Activated CD8-positive, alpha-beta memory T cell treated with anti-CD3 and anti-CD28 coated beads, Interleukin-2, amount 10 ng/mL, durations not matched to agents 7 days and 5 days (primary cell): ENCODE measurements at regions of chr12 and their contacts with region 1.

Region 1: DNA sequence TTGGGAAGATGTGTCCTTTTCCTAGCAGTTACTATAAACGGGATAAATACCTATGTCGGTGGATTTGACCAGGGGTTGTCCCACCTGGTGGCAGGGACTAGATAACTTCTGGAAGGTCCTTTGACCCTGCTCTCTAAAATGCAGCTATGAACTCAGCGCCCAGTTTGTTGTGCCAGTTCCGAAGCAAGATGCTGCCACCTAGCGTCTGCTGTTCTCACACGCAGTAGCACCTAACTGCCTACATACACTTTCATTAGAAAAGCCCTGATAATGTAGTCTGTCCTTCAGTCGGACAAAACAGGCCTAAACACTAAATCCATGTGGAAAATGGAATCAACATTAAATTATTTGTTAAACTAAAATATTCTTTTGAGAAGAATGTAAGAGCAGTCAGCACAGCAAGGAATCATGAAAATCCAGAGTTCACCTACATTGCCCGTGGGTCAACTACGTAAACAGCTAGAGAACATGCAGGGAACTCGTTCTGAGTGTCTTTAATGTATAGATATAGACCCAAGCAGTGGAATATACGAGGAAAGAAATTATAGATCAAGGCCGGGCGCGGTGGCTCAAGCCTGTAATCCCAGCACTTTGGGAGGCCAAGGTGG is 51.1 kb upstream of the CRACR2A start:
- DNase-seq: peak; percentile 85
- ATAC-seq: peak; percentile 83
- H3K4me3 Mint-ChIP-seq: no peak overlapping the region
- H3K27ac Mint-ChIP-seq: no peak overlapping the region
- H3K4me1 Mint-ChIP-seq: peaks cover 4% of the 10 kb centered on the region
- H3K27me3 Mint-ChIP-seq: no peaks in the 10 kb centered on the region

Region 2: GRCh38 chr12:3313675-3314663 is 490.0 kb before region 1 on chr12:
- CTCF ChIA-PET with region 1: interaction called, 23 read pairs
- DNase-seq: peak; percentile 45
- ATAC-seq: peak; percentile 76
- H3K4me3 Mint-ChIP-seq: no peak overlapping the region
- H3K27ac Mint-ChIP-seq: no peak overlapping the region
- H3K4me1 Mint-ChIP-seq: no peaks in the 10 kb centered on the region
- H3K27me3 Mint-ChIP-seq: peaks cover 8% of the 10 kb centered on the region

Region 3: GRCh38 chr12:3718100-3718499 is 85.9 kb before region 1 on chr12:
- CTCF ChIA-PET with region 1: no interaction called
- DNase-seq: peak; percentile 8
- ATAC-seq: no peak
- H3K4me3 Mint-ChIP-seq: no peak overlapping the region
- H3K27ac Mint-ChIP-seq: no peak overlapping the region
- H3K4me1 Mint-ChIP-seq: peaks cover 4% of the 10 kb centered on the region
- H3K27me3 Mint-ChIP-seq: no peaks in the 10 kb centered on the region

Region 4: GRCh38 chr12:3743803-3744202 is 60.2 kb before region 1 on chr12:
- CTCF ChIA-PET with region 1: interaction called, 10 read pairs
- DNase-seq: peak; percentile 93
- ATAC-seq: peak; percentile 82
- H3K4me3 Mint-ChIP-seq: peak overlapping the region; percentile 58
- H3K27ac Mint-ChIP-seq: peak overlapping the region; percentile 96
- H3K4me1 Mint-ChIP-seq: peaks cover 82% of the 10 kb centered on the region
- H3K27me3 Mint-ChIP-seq: no peaks in the 10 kb centered on the region

Region 5: DNA sequence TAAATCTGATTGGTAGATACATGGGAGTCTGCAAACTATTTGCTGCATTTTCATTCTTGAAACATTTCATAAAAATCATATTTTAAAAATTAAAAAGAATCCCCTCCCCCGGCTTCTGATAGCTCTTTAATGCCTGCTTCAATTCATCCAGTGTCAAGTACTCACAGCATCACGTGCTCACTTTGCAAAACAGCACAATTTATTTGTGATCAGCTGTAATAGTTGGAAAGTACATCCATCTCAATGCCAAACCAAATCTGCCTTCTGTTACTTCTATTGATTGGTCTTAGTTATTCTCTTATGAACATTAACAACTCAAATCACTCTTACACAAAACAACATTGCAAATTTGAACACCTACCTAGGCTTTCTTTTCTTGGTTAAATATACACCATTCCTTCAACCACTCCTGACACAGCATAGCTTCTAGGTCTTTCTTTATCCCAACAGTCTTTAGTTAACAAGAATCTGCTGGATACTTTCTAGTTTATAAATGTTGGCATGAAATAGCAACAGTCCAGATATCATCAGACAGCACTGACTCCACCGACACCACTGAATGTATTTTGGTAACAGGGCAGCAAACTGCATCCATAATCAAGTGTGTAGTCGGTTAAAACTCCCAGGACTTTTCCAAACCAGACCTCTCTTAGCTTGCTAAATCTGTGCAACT is 11.3 kb after region 1 on chr12:
- CTCF ChIA-PET with region 1: interaction called, 15 read pairs
- DNase-seq: no peak
- ATAC-seq: no peak
- H3K4me3 Mint-ChIP-seq: no peak overlapping the region
- H3K27ac Mint-ChIP-seq: peak overlapping the region; percentile 19
- H3K4me1 Mint-ChIP-seq: peaks cover 3% of the 10 kb centered on the region
- H3K27me3 Mint-ChIP-seq: no peaks in the 10 kb centered on the region